ENCODE measurements at regions of chr11 and their contacts with region 1.

Region 1: GRCh38 chr11:133927690-133928627 is 28.8 kb downstream of the IGSF9B start:
- DNase-seq: peak; percentile 64 to 79 (median 74)
- H3K4me3 ChIP-seq: peak overlapping the region in 1 of 2 donors; percentile 62
- H3K4me3 Mint-ChIP-seq: peak overlapping the region; percentile 85 to 96 (median 92)
- H3K27ac ChIP-seq: peak overlapping the region; percentile 44
- H3K27ac Mint-ChIP-seq: peak overlapping the region; percentile 49 to 95 (median 91)
- H3K4me1 ChIP-seq: peaks cover 28% of the 10 kb centered on the region
- H3K4me1 Mint-ChIP-seq: peaks cover 15 to 36% (median 20%) of the 10 kb centered on the region in 4 donors
- H3K27me3 ChIP-seq: no peaks in the 10 kb centered on the region
- H3K27me3 Mint-ChIP-seq: no peaks in the 10 kb centered on the region

Region 2: GRCh38 chr11:133947321-133947756 is 19.4 kb after region 1 on chr11:
- CTCF ChIA-PET with region 1: interaction called, 54 read pairs
- POLR2A ChIA-PET with region 1: interaction called, 59 read pairs
- intact Hi-C with region 1: loop called (anchors 1 kb)
- DNase-seq: peak; percentile 70 to 81 (median 78)
- H3K4me3 ChIP-seq: peak overlapping the region; percentile 9 to 38
- H3K4me3 Mint-ChIP-seq: peak overlapping the region; percentile 56 to 90 (median 80)
- H3K27ac ChIP-seq: peak overlapping the region; percentile 12
- H3K27ac Mint-ChIP-seq: peak overlapping the region; percentile 81 to 97 (median 92)
- H3K4me1 ChIP-seq: peaks cover 73% of the 10 kb centered on the region
- H3K4me1 Mint-ChIP-seq: peaks cover 43 to 81% (median 62%) of the 10 kb centered on the region in 4 donors
- H3K27me3 ChIP-seq: no peaks in the 10 kb centered on the region
- H3K27me3 Mint-ChIP-seq: peaks cover 0 to 10% of the 10 kb centered on the region in 2 donors

Region 3: GRCh38 chr11:134033696-134034491 is 105.9 kb after region 1 on chr11:
- CTCF ChIA-PET with region 1: interaction called, 22 read pairs
- POLR2A ChIA-PET with region 1: interaction called, 13 read pairs
- intact Hi-C with region 1: loop called (anchors 5 kb)
- DNase-seq: peak; percentile 36 to 75 (median 50)
- H3K4me3 ChIP-seq: peak overlapping the region in 1 of 2 donors; percentile 29
- H3K4me3 Mint-ChIP-seq: peak overlapping the region in 7 of 8 donors; percentile 57 to 87 (median 70)
- H3K27ac ChIP-seq: peak overlapping the region; percentile 5
- H3K27ac Mint-ChIP-seq: peak overlapping the region; percentile 59 to 87 (median 67)
- H3K4me1 ChIP-seq: peaks cover 50% of the 10 kb centered on the region
- H3K4me1 Mint-ChIP-seq: peaks cover 27 to 70% (median 45%) of the 10 kb centered on the region in 4 donors
- H3K27me3 ChIP-seq: no peaks in the 10 kb centered on the region
- H3K27me3 Mint-ChIP-seq: no peaks in the 10 kb centered on the region

Region 4: DNA sequence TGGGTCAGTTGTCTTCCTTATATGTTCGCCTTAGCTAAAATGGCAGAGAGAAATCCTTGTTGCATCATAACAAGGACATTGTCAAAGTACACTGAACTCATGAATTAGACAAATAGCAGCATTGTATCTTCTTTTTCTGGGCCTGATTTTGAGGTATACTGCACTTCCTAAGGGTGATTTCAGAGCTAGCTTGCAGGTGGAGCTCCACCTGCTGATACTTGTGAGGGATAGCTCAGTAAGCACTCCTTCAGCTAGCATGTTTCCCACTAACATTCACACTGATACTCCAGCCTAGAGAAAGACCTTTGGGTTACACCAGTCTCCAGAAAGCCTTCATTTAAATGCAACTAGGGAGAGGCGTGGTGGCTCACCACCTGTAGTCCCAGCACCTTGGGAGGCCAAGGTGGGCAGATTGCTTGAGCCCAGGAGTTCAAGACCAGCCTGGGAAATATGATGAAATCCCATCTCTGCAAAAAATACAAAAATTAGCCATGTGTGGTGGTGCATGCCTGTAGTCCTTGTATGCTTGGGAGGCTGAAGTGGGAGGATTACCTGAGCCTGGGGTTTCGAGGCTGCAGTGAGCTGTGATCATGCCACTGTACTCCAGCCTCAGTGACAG is 170.7 kb after region 1 on chr11:
- CTCF ChIA-PET with region 1: interaction called, 30 read pairs
- POLR2A ChIA-PET with region 1: no interaction called
- intact Hi-C with region 1: no loop called
- DNase-seq: peak in 3 of 5 donors; percentile 2 to 10 (median 4)
- H3K4me3 ChIP-seq: no peak overlapping the region
- H3K4me3 Mint-ChIP-seq: no peak overlapping the region
- H3K27ac ChIP-seq: no peak overlapping the region
- H3K27ac Mint-ChIP-seq: no peak overlapping the region
- H3K4me1 ChIP-seq: no peaks in the 10 kb centered on the region
- H3K4me1 Mint-ChIP-seq: peaks cover 0 to 6% (median 2%) of the 10 kb centered on the region in 4 donors
- H3K27me3 ChIP-seq: no peaks in the 10 kb centered on the region
- H3K27me3 Mint-ChIP-seq: peaks cover 1 to 2% of the 10 kb centered on the region in 2 donors

Region 5: DNA sequence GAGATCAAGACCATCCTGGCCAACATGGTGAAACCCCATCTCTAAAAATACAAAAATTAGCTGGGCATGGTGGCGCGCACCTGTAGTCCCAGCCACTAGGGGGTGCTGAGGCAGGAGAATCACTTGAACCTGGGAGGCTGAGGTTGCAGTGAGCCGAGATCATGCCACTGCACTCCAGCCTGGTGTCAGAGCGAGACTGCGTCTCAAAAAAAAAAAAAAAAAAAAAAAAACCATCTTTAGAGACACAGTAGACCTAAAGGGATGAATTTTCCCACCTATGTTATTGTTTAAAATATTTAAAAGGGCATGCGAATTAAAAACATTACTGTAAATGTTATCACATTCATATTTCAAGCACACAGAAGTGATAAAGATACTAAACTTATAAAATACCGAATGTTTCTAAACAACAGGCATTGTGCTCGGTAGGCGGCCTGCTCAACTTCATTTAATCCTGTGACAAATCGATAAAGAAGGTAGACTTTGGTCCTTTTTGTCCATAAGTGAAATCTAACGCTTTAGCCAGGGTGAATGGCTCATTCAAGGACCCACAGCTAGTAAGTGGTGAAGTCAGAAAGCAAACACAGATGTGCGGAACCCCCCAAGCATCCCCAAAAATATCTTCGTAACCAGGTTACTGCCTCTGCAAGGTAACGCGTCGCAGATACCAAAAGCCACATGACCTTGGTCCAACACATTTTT is 279.7 kb after region 1 on chr11:
- CTCF ChIA-PET with region 1: interaction called, 9 read pairs
- POLR2A ChIA-PET with region 1: no interaction called
- intact Hi-C with region 1: loop called (anchors 5 kb)
- DNase-seq: peak; percentile 54 to 69 (median 64)
- H3K4me3 ChIP-seq: no peak overlapping the region
- H3K4me3 Mint-ChIP-seq: no peak overlapping the region
- H3K27ac ChIP-seq: no peak overlapping the region
- H3K27ac Mint-ChIP-seq: peak overlapping the region in 4 of 7 donors; percentile 17 to 24 (median 22)
- H3K4me1 ChIP-seq: no peaks in the 10 kb centered on the region
- H3K4me1 Mint-ChIP-seq: peaks cover 1 to 7% (median 5%) of the 10 kb centered on the region in 4 donors
- H3K27me3 ChIP-seq: no peaks in the 10 kb centered on the region
- H3K27me3 Mint-ChIP-seq: no peaks in the 10 kb centered on the region

Region 6: DNA sequence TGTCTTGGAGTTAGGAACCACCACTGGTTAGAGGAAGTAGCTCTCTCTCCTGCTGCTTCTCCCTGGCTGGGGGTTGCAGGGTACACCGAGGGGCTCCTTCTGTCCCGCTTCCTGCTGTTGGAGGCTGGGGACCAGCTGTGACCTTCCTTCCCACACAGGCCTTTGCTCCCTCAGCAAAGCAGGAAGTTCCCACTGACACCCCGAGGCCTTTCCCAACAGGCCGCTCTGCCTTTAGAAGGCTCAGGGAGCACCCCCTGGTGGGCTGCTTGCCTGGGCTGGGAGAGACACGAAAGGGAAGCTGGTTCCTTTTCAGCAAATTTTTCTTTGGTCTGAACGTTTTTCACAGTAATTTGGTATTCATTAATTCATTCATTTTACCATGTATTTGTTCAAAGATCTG is 1011.9 kb after region 1 on chr11:
- CTCF ChIA-PET with region 1: no interaction called
- POLR2A ChIA-PET with region 1: no interaction called
- intact Hi-C with region 1: no loop called
- DNase-seq: no peak
- H3K4me3 ChIP-seq: no peak overlapping the region
- H3K4me3 Mint-ChIP-seq: no peak overlapping the region
- H3K27ac ChIP-seq: no peak overlapping the region
- H3K27ac Mint-ChIP-seq: no peak overlapping the region
- H3K4me1 ChIP-seq: no peaks in the 10 kb centered on the region
- H3K4me1 Mint-ChIP-seq: no peaks in the 10 kb centered on the region
- H3K27me3 ChIP-seq: no peaks in the 10 kb centered on the region
- H3K27me3 Mint-ChIP-seq: peaks cover 4 to 9% of the 10 kb centered on the region in 2 donors